AG04450 (cell line): ENCODE measurements at regions of chr1 and their contacts with region 1.

Region 1: GRCh38 chr1:96253246-96254035 is 468.1 kb upstream of the PTBP2 start:
- DNase-seq: no peak
- H3K4me3 ChIP-seq: no peak overlapping the region
- H3K27ac ChIP-seq: no peak overlapping the region
- H3K27me3 ChIP-seq: no peaks in the 10 kb centered on the region
- CTCF ChIP-seq: no peak

Region 2: GRCh38 chr1:96236156-96236739 is 17.2 kb before region 1 on chr1:
- CTCF ChIA-PET with region 1: interaction called, 12 read pairs
- POLR2A ChIA-PET with region 1: no interaction called
- DNase-seq: peak; percentile 30
- H3K4me3 ChIP-seq: no peak overlapping the region
- H3K27ac ChIP-seq: no peak overlapping the region
- H3K27me3 ChIP-seq: no peaks in the 10 kb centered on the region
- CTCF ChIP-seq: peak; percentile 65